K562 (cell line): ENCODE measurements at regions of chr4 and their contacts with region 1.

Region 1: DNA sequence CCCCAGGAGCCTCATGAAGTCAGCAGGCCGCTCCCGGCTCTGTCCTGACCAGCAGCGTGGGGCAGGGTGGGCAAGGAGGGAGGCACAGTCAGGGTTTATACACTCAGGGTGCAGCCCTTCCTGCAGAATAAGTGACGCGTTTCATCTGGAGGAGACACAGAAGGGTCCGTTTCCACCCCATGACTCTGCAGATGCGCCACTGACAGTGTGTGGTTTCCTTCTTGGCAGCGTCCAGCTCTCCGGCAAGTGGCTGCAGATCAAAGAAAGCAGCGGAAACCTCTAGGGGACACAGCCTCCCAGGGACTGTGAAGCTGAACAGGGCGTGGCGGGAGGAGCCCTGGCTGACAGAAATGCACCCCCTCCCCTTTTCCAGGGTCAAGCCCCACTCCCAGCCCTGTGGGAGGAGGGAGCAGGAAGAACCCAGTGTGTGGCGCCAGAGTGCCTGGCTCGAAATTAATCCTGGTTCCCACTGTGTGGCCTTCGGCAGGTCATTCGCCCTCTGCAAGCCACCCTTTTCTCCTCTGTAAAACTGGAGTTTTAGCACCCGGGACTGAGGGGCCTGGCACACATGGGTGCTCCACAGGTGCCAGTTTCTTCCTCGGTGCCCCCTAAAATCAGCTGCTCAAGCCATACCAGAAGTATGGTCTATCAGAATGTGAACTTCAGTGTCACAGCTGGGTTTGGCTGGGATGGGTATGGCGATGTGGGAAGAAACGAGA is 17.3 kb upstream of the TBC1D14 start:
- DNase-seq: peak; percentile 89 to 93 (median 89)
- ATAC-seq: peak; percentile 89
- H3K4me3 ChIP-seq: peak overlapping the region; percentile 1; the same call in 1 of the 2 replicates
- H3K27ac ChIP-seq: peak overlapping the region; percentile 80
- H3K4me1 ChIP-seq: peaks cover 35 to 60% of the 10 kb centered on the region in 2 experiments
- H3K27me3 ChIP-seq: no peaks in the 10 kb centered on the region
- CTCF ChIP-seq: peak; percentile 32 to 62 (median 53); a peak in 5 of 6 replicates
- EP300 ChIP-seq: no peak; the same call in 1 of the 2 replicates
- POLR2A ChIP-seq: peak; percentile 52; the same call in 1 of the 2 replicates
- RAD21 ChIP-seq: peak; percentile 33 to 62

Region 2: DNA sequence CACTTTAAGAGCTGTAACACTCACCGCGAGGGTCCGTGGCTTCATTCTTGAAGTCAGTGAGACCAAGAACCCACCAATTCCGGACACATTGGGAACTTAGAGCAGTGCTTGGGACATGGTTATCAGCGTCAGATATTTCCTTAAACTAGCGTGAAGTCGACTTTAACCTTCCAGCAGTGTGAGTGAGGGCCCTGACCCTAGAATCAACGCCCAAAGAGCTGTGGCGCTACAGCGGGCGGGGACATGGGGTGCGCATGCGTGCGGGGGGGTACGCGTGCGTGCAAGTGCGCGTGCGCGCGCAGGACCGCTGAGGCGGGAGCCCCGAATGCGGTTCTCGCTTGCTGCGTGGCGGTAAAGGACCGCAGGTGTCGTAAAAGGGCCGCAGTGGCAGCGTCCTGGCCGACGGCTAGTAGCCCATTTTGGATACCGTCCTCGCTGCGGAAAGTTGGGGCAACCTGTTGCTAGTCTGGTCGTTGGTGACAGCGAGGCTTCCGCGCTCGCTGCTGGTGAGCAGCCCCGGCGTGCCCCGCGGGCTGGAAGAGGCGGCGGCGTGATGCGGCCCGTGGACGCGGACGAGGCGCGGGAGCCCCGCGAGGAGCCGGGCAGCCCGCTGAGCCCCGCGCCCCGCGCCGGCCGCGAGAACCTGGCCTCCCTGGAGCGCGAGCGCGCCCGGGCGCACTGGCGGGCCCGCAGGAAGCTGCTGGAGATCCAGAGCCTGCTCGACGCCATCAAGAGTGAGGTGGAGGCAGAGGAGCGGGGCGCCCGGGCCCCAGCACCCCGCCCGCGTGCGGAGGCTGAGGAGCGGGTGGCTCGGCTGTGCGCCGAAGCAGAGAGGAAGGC is 218.5 kb before region 1 on chr4:
- CTCF ChIA-PET with region 1: no interaction called
- POLR2A ChIA-PET with region 1: no interaction called
- in situ Hi-C with region 1: no loop called
- intact Hi-C with region 1: no loop called
- DNase-seq: peak; percentile 96 to 98 (median 97)
- ATAC-seq: peak; percentile 83
- H3K4me3 ChIP-seq: peak overlapping the region; percentile 95
- H3K27ac ChIP-seq: peak overlapping the region; percentile 99
- H3K4me1 ChIP-seq: peaks cover 29 to 33% of the 10 kb centered on the region in 2 experiments
- H3K27me3 ChIP-seq: no peaks in the 10 kb centered on the region
- CTCF ChIP-seq: peak in 1 of 3 experiments; percentile 21; a peak in 2 of 6 replicates
- EP300 ChIP-seq: no peak
- POLR2A ChIP-seq: peak; percentile 99
- RAD21 ChIP-seq: no peak

Region 3: GRCh38 chr4:6909073-6909965 is 17.0 kb after region 1 on chr4 and contains the start of gene TBC1D14:
- CTCF ChIA-PET with region 1: interaction called, 3 read pairs
- POLR2A ChIA-PET with region 1: interaction called, 20 read pairs
- in situ Hi-C with region 1: no loop called
- intact Hi-C with region 1: no loop called
- DNase-seq: peak; percentile 90 to 96 (median 94)
- ATAC-seq: peak; percentile 86
- H3K4me3 ChIP-seq: peak within 1 kb of the TSS; percentile 94
- H3K27ac ChIP-seq: peak within 1 kb of the TSS; percentile 98
- H3K4me1 ChIP-seq: peaks cover 48 to 58% of the 10 kb centered on the region in 2 experiments
- H3K27me3 ChIP-seq: no peaks in the 10 kb centered on the region
- CTCF ChIP-seq: 0 out of 6 replicates have a peak, but pooled peaks of 2 of the 3 experiments have one; percentile 19 to 23
- EP300 ChIP-seq: 0 out of 2 replicates have a peak, but pooled peaks have one; percentile 27
- POLR2A ChIP-seq: peak; percentile 78
- RAD21 ChIP-seq: no peak
- polyA plus RNA-seq, gene TBC1D14: 2.1 to 2.7 TPM

Region 4: DNA sequence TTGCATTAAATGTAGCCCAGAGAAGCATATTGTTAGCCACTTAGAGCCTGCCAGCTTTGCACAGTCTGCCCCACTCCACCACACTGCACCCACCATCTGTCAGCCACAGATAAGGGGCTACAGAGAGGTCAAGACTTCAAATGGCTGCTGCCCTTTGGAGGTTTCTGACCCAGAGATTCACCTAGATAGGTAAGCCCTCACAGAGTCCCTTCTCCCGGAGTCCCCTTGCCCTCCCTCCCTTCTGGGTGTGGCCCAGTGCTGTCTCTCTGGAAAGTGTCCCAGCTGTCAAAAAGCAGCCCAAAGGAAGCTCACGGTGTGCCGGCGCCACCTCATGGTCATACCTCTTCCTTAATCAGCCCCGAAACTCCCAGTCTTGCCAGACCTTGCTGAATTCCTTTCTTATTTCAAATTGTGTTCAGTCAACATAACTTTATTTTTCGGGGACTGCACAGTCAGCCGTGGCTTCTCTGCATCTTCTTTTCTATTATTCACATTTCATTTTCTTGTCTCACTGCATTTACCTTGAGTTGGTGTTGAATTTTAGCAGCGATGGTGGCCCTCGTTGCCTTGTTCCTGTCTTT is 189.6 kb after region 1 on chr4:
- CTCF ChIA-PET with region 1: no interaction called
- POLR2A ChIA-PET with region 1: interaction called, 4 read pairs
- in situ Hi-C with region 1: no loop called
- intact Hi-C with region 1: loop called (anchors 5 kb)
- DNase-seq: peak; percentile 87 to 95 (median 90)
- ATAC-seq: peak; percentile 98
- H3K4me3 ChIP-seq: no peak overlapping the region
- H3K27ac ChIP-seq: no peak overlapping the region
- H3K4me1 ChIP-seq: peaks cover 11 to 21% of the 10 kb centered on the region in 2 experiments; a peak in 4 of 5 replicates
- H3K27me3 ChIP-seq: no peaks in the 10 kb centered on the region
- CTCF ChIP-seq: peak; percentile 84 to 96 (median 89)
- EP300 ChIP-seq: peak; percentile 50; the same call in 1 of the 2 replicates
- POLR2A ChIP-seq: no peak
- RAD21 ChIP-seq: peak; percentile 84 to 90